Right ventricle myocardium inferior (tissue), 1 donor: ENCODE measurements at regions of chr6 and their contacts with region 1.

Region 1: DNA sequence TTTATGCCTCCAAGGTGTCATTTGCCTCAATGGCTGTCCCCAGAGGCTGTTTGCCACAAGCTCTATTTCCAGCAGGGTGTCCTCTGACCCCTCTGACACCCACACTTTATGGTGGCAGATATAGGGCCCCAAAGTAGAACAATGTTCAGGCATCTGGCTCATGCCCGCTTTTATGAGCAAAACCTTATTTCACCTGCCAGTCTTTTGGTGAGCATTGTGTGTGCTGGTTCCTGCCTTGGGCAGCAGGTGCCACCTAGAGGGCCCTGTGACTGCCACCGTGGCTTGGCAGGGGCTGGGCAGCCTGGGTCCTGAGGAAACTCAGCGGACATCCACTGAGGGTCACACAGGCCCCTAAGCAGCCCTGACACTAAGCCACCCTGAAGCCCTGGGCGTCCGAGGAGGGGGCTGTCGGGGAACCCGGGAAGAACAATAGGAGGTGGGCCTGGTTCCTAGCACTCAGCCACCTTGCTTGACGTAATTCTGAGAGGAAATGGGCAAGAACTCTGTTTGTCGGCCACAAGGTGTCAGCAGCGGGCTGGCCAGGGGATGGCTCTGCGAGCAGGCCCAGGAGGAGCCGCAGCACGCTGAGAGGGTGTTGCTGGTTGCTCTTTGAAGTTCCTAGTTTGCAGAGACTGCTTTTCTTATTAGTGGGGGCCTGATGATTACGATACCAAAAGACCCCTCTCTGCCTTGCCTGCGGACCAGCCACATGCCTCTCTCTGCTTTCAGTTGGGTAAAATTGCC is 148.9 kb downstream of the SCML4 start:
- DNase-seq: peak; percentile 90
- ATAC-seq: peak; percentile 86

Region 2: GRCh38 chr6:107318100-107318736 is 356.9 kb before region 1 on chr6:
- intact Hi-C with region 1: loop called (anchors 10 kb)
- DNase-seq: no peak
- ATAC-seq: peak; percentile 84

Region 3: DNA sequence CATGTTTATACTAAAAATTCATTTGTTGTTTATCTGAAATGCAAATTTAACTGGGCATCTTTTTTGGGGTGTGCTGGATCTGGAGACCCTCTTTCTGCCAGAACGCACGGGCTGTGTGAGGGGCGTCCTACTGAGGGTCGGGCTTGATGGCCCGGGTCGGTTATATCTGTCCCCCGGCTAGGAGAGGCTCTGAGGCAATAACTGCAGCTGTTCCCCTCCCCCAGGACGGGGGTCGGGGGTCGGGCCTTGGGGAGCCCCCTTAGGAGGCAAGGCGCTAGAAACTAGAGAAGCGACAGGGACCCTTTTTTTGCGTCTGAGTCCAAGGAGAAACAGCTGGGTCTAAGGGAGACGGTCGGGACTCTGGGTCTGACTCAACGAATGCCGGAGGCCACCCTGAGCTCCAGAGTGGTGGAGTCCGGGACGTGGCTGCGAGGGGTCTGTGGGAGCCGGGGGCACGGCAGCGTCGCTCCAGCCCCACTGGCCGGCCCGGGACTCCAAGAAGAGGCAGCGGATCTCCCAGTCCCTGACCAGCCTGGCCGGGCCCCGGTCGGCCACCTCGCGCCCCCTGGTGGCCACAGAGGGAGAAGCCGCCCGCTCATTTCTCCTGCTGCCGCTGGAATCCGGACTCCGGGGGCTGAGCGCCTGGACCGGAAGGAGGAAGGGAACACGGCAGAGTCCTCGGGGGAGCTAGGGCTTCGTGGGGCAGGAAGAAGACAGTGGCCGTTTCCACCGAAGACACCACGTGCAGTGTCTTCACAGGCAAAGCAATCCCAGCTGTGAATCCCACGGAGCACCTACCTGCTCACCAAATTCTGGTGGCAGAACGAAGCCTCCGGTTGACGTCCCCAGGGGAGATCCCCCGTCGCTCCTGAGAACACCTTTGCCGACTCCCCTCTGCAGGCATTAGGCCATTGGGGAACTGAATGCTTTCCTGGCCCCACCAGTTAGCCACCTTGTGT is 173.0 kb after region 1 on chr6:
- intact Hi-C with region 1: loop called (anchors 1 kb)
- DNase-seq: peak; percentile 93
- ATAC-seq: peak; percentile 94

Region 4: GRCh38 chr6:108501559-108501958 is 826.4 kb after region 1 on chr6:
- intact Hi-C with region 1: no loop called
- DNase-seq: no peak
- ATAC-seq: no peak

Region 5: GRCh38 chr6:108526739-108527174 is 851.6 kb after region 1 on chr6:
- intact Hi-C with region 1: loop called (anchors 10 kb)
- DNase-seq: no peak
- ATAC-seq: peak; percentile 39